ENCODE measurements at regions of chr1 and their contacts with region 1.

Region 1: DNA sequence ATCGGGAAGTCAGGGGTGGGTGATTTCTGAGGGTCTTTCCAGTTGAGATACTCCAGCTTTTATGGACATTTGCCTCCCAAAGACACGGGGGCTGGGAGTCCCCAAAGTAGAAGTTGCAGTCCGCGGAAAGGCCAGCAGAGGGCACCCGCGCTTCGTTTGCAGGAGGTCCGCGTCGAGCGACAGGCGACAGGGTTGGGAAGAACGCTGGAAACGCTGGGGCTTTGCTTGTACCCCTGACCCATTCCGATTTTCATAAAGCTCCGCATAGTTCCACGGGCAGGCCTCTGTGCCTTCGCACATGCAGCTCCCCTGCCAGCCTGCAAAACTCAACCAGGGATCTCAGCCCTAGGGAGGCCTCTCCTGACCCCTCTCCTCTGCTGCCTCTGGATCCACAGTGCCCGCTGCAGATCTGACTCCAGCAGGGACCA is 44.2 kb upstream of the LAPTM5 start:
- DNase-seq: peak; percentile 91

Region 2: GRCh38 chr1:30718636-30719405 is 83.0 kb before region 1 on chr1:
- CTCF ChIA-PET with region 1: interaction called, 10 read pairs
- POLR2A ChIA-PET with region 1: interaction called, 4 read pairs
- DNase-seq: peak; percentile 87

Region 3: GRCh38 chr1:30911046-30911954 is 109.5 kb after region 1 on chr1:
- CTCF ChIA-PET with region 1: interaction called, 159 read pairs
- POLR2A ChIA-PET with region 1: interaction called, 36 read pairs
- DNase-seq: peak; percentile 94

Region 4: GRCh38 chr1:30919025-30919881 is 117.5 kb after region 1 on chr1:
- CTCF ChIA-PET with region 1: interaction called, 159 read pairs
- POLR2A ChIA-PET with region 1: interaction called, 4 read pairs
- DNase-seq: no peak

Region 5: GRCh38 chr1:30929135-30929889 is 127.5 kb after region 1 on chr1:
- CTCF ChIA-PET with region 1: interaction called, 25 read pairs
- POLR2A ChIA-PET with region 1: no interaction called
- DNase-seq: peak; percentile 85

Region 6: GRCh38 chr1:30955448-30956015 is 153.7 kb after region 1 on chr1:
- CTCF ChIA-PET with region 1: no interaction called
- POLR2A ChIA-PET with region 1: no interaction called
- DNase-seq: no peak